GM12878 (cell line): ENCODE measurements at regions of chrX and their contacts with region 1.

Region 1: GRCh38 chrX:78653118-78653822 is 5.9 kb downstream of the RTL3 start:
- DNase-seq: no peak
- ATAC-seq: peak; percentile 78
- H3K4me3 ChIP-seq: no peak overlapping the region
- H3K27ac ChIP-seq: no peak overlapping the region
- H3K4me1 ChIP-seq: peaks cover 3% of the 10 kb centered on the region; the same call in 1 of the 2 replicates
- H3K27me3 ChIP-seq: no peaks in the 10 kb centered on the region
- CTCF ChIP-seq: no peak
- EP300 ChIP-seq: no peak
- POLR2A ChIP-seq: no peak
- RAD21 ChIP-seq: no peak

Region 2: GRCh38 chrX:78643096-78643495 is 10.2 kb before region 1 on chrX:
- CTCF ChIA-PET with region 1: no interaction called
- POLR2A ChIA-PET with region 1: no interaction called
- RAD21 ChIA-PET with region 1: no interaction called
- SMC1A ChIA-PET with region 1: interaction called, 10 read pairs
- in situ Hi-C with region 1: no loop called
- intact Hi-C with region 1: no loop called
- DNase-seq: no peak
- ATAC-seq: no peak
- H3K4me3 ChIP-seq: no peak overlapping the region
- H3K27ac ChIP-seq: no peak overlapping the region
- H3K4me1 ChIP-seq: no peaks in the 10 kb centered on the region
- H3K27me3 ChIP-seq: no peaks in the 10 kb centered on the region
- CTCF ChIP-seq: no peak
- EP300 ChIP-seq: no peak
- POLR2A ChIP-seq: no peak
- RAD21 ChIP-seq: no peak

Region 3: DNA sequence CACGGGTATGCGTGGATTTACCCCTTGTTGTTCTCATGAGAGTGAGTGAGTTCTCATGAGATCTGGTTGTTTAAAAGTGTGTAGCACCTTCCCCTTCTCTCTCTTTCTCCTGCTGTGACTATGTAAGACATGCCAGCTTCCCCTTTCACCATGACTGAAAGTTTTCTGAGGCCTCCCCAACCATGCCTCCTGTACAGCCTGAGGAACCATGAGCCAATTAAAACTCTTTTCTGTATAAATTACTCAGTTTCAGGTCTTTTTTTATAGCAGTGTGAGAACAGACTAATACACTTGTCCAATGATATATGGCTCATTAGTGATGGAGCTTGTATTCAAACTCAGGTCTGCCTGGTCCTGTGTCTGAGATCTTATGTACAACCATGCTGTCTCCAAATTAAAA is 34.3 kb after region 1 on chrX:
- CTCF ChIA-PET with region 1: interaction called, 3 read pairs
- POLR2A ChIA-PET with region 1: interaction called, 3 read pairs
- RAD21 ChIA-PET with region 1: interaction called, 10 read pairs
- SMC1A ChIA-PET with region 1: interaction called, 4 read pairs
- in situ Hi-C with region 1: no loop called
- intact Hi-C with region 1: no loop called
- DNase-seq: peak; percentile 64
- ATAC-seq: peak; percentile 94
- H3K4me3 ChIP-seq: no peak overlapping the region
- H3K27ac ChIP-seq: no peak overlapping the region
- H3K4me1 ChIP-seq: no peaks in the 10 kb centered on the region
- H3K27me3 ChIP-seq: no peaks in the 10 kb centered on the region
- CTCF ChIP-seq: no peak
- EP300 ChIP-seq: no peak
- POLR2A ChIP-seq: no peak
- RAD21 ChIP-seq: no peak